ENCODE measurements at regions of chr6 and their contacts with region 1.

Region 1: DNA sequence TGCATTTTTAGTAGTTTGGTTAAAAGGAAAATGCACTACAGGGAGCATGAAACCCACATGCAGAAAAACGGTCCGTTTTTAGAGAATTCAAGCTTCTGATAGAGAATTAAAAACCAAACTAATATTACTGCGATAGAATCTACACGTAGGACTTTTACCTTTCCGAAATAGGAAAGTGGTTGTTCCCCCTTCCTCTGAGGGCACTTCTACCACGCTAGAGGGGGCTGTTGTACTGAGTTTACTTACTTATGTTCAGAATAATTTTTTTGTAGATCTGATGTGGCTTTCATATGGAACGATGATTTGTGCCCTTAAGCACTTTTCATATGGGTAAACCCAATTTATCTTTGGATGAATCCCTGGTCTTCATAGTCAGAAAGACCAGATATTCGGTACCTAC is 264.3 kb upstream of the PLN start:
- DNase-seq: peak; percentile 59
- H3K4me3 Mint-ChIP-seq: no peak overlapping the region
- H3K27ac Mint-ChIP-seq: no peak overlapping the region
- H3K4me1 Mint-ChIP-seq: peaks cover 8% of the 10 kb centered on the region
- H3K27me3 Mint-ChIP-seq: no peaks in the 10 kb centered on the region
- CTCF ChIP-seq: peak; percentile 61

Region 2: GRCh38 chr6:118335325-118335816 is 51.6 kb after region 1 on chr6:
- CTCF ChIA-PET with region 1: no interaction called
- intact Hi-C with region 1: no loop called
- DNase-seq: no peak
- H3K4me3 Mint-ChIP-seq: no peak overlapping the region
- H3K27ac Mint-ChIP-seq: no peak overlapping the region
- H3K4me1 Mint-ChIP-seq: no peaks in the 10 kb centered on the region
- H3K27me3 Mint-ChIP-seq: no peaks in the 10 kb centered on the region
- CTCF ChIP-seq: no peak

Region 3: DNA sequence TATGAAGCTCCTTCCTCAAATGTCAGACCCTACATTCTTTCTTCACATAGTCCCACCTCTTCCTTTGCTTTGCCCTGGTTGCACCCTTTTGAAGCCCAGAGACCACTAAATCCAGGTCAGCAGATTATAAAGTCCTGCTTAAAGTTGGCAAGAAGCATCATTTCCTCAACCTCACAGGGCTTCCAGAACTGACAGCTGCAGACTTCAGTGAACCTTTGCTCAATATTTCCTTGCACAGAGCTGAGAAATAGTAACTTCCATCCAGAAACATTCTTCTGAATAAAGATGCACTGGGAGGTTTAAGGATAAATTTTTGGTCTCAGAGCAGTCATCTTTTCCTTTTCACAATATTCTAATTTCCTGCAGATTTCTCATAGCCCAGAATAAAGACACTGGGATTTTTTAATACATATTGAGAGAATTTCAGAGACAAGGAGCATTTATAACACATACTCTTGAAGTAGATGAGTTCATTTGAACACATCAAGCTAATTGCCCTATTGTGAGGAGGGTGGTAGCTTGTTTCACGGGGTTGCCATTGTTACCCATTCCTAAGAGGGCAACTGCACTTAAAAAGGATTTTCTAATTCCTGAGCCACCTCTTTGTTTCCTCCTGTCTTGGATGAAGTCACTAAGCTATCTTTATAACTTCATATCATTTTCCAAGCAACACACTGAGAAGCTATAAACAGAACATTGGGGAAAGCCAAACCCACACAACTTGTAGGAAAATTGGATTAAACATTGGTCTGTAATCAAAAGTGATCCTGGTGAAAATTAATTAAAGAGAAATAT is 114.1 kb after region 1 on chr6:
- CTCF ChIA-PET with region 1: no interaction called
- intact Hi-C with region 1: no loop called
- DNase-seq: no peak
- H3K4me3 Mint-ChIP-seq: no peak overlapping the region
- H3K27ac Mint-ChIP-seq: no peak overlapping the region
- H3K4me1 Mint-ChIP-seq: no peaks in the 10 kb centered on the region
- H3K27me3 Mint-ChIP-seq: no peaks in the 10 kb centered on the region
- CTCF ChIP-seq: no peak

Region 4: DNA sequence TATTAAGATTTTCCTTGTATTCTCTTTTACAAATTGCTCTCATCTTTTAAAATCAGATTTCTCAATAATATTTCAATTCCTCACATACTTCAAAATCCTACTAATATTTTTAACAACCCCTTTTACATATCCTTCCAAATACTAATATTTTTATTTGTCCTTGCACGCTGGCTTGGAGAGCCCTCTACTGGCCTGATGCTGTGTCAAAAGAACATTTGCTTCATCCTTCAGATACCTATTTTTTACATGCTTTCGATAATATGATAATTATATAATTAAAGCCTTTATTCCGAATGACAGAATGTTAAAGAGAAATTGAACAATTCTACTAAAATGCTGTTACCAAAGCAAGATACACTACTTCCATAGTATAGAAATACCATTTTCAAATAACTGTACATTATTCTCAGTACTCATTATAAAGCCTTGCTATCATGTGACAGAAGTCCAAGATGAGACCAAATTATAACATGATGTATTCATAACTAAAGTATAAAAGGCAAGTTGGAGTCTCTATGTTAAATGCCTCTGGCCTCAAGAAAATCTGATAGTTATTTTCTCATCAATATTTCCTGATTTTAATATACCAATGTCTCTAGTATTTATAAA is 225.3 kb after region 1 on chr6:
- CTCF ChIA-PET with region 1: no interaction called
- intact Hi-C with region 1: loop called (anchors 1 kb)
- DNase-seq: peak; percentile 34
- H3K4me3 Mint-ChIP-seq: no peak overlapping the region
- H3K27ac Mint-ChIP-seq: no peak overlapping the region
- H3K4me1 Mint-ChIP-seq: no peaks in the 10 kb centered on the region
- H3K27me3 Mint-ChIP-seq: no peaks in the 10 kb centered on the region
- CTCF ChIP-seq: no peak

Region 5: GRCh38 chr6:118551063-118552053 is 267.6 kb after region 1 on chr6:
- CTCF ChIA-PET with region 1: no interaction called
- intact Hi-C with region 1: loop called (anchors 1 kb)
- DNase-seq: peak; percentile 16
- H3K4me3 Mint-ChIP-seq: no peak overlapping the region
- H3K27ac Mint-ChIP-seq: no peak overlapping the region
- H3K4me1 Mint-ChIP-seq: peaks cover 5% of the 10 kb centered on the region
- H3K27me3 Mint-ChIP-seq: no peaks in the 10 kb centered on the region
- CTCF ChIP-seq: peak; percentile 15

Region 6: GRCh38 chr6:118618679-118619377 is 335.1 kb after region 1 on chr6:
- CTCF ChIA-PET with region 1: no interaction called
- intact Hi-C with region 1: loop called (anchors 5 kb)
- DNase-seq: peak; percentile 72
- H3K4me3 Mint-ChIP-seq: no peak overlapping the region
- H3K27ac Mint-ChIP-seq: no peak overlapping the region
- H3K4me1 Mint-ChIP-seq: no peaks in the 10 kb centered on the region
- H3K27me3 Mint-ChIP-seq: no peaks in the 10 kb centered on the region
- CTCF ChIP-seq: peak; percentile 59

Region 7: GRCh38 chr6:118776607-118777549 is 493.1 kb after region 1 on chr6:
- CTCF ChIA-PET with region 1: no interaction called
- intact Hi-C with region 1: loop called (anchors 10 kb)
- DNase-seq: peak; percentile 64
- H3K4me3 Mint-ChIP-seq: no peak overlapping the region
- H3K27ac Mint-ChIP-seq: no peak overlapping the region
- H3K4me1 Mint-ChIP-seq: peaks cover 13% of the 10 kb centered on the region
- H3K27me3 Mint-ChIP-seq: no peaks in the 10 kb centered on the region
- CTCF ChIP-seq: peak; percentile 26